ENCODE measurements at regions of chr6 and their contacts with region 1.

Region 1: DNA sequence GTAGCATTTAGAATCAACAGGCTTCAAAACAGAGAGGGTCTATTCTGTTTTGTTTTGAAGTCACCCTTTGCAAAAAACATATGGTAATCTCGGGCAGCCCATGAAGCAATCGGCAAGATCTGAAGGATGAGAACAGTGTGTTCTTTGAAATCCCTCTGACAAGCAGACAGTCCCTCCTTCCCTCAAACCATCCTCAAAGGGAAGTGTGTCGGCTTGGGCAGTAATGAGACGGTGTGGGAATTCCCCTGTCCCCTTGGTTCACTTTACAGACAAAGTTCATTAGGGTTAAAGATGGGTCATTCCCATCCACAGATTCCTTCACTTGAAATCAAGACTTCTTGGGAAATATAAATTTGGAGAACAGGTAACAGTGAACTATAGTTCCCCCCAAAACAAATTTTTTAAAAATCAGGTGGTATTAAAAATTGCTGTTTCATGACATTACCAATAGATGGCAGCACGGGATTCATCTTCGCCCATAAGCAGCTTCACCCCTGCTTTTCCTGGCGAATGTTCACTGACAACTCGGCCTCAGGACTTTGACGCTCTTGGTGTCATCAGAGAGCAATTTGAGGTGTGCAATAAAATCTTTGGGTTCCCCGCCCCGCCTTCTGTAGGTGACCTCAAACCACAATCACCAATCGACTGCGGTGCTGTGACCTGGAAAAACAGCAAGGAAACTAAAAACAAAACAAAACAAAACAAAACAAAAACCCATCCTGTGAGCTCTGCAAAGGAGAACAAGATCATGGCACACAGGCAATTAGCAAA is 159.3 kb upstream of the TNFAIP3 start:
- DNase-seq: peak; percentile 91
- ATAC-seq: peak; percentile 80
- H3K4me3 ChIP-seq: peak overlapping the region in 3 of 5 experiments; percentile 13 to 20 (median 16)
- H3K4me3 Mint-ChIP-seq: peak overlapping the region; percentile 75
- H3K27ac ChIP-seq: peak overlapping the region; percentile 16 to 27
- H3K27ac Mint-ChIP-seq: peak overlapping the region; percentile 88
- H3K4me1 ChIP-seq: peaks cover 17 to 19% of the 10 kb centered on the region in 2 donors
- H3K4me1 Mint-ChIP-seq: peaks cover 49% of the 10 kb centered on the region
- H3K27me3 ChIP-seq: no peaks in the 10 kb centered on the region
- H3K27me3 Mint-ChIP-seq: peaks cover 5% of the 10 kb centered on the region
- CTCF ChIP-seq: peak; percentile 88

Region 2: GRCh38 chr6:137791281-137792159 is 83.7 kb after region 1 on chr6:
- CTCF ChIA-PET with region 1: interaction called, 5 read pairs
- POLR2A ChIA-PET with region 1: no interaction called
- intact Hi-C with region 1: loop called (anchors 5 kb)
- DNase-seq: no peak
- ATAC-seq: no peak
- H3K4me3 ChIP-seq: no peak overlapping the region
- H3K4me3 Mint-ChIP-seq: peak overlapping the region; percentile 27
- H3K27ac ChIP-seq: peak overlapping the region in 1 of 2 donors; percentile 66
- H3K27ac Mint-ChIP-seq: peak overlapping the region; percentile 86
- H3K4me1 ChIP-seq: peaks cover 23 to 25% of the 10 kb centered on the region in 2 donors
- H3K4me1 Mint-ChIP-seq: peaks cover 41% of the 10 kb centered on the region
- H3K27me3 ChIP-seq: no peaks in the 10 kb centered on the region
- H3K27me3 Mint-ChIP-seq: no peaks in the 10 kb centered on the region
- CTCF ChIP-seq: no peak

Region 3: GRCh38 chr6:137866914-137867684 is 159.3 kb after region 1 on chr6 and contains the start of gene TNFAIP3:
- CTCF ChIA-PET with region 1: interaction called, 34 read pairs
- POLR2A ChIA-PET with region 1: interaction called, 10 read pairs
- intact Hi-C with region 1: loop called (anchors 1 kb)
- DNase-seq: peak; percentile 99
- ATAC-seq: peak; percentile 80
- H3K4me3 ChIP-seq: peak within 1 kb of the TSS; percentile 95 to 99 (median 96)
- H3K4me3 Mint-ChIP-seq: peak within 1 kb of the TSS; percentile 94
- H3K27ac ChIP-seq: peak within 1 kb of the TSS; percentile 96 to 97
- H3K27ac Mint-ChIP-seq: peak within 1 kb of the TSS; percentile 99
- H3K4me1 ChIP-seq: peaks cover 40 to 43% of the 10 kb centered on the region in 2 donors
- H3K4me1 Mint-ChIP-seq: peaks cover 50% of the 10 kb centered on the region
- H3K27me3 ChIP-seq: no peaks in the 10 kb centered on the region
- H3K27me3 Mint-ChIP-seq: no peaks in the 10 kb centered on the region
- CTCF ChIP-seq: peak; percentile 73
- total RNA-seq, gene TNFAIP3: 92.0 and 92.2 TPM in 2 replicates

Region 4: DNA sequence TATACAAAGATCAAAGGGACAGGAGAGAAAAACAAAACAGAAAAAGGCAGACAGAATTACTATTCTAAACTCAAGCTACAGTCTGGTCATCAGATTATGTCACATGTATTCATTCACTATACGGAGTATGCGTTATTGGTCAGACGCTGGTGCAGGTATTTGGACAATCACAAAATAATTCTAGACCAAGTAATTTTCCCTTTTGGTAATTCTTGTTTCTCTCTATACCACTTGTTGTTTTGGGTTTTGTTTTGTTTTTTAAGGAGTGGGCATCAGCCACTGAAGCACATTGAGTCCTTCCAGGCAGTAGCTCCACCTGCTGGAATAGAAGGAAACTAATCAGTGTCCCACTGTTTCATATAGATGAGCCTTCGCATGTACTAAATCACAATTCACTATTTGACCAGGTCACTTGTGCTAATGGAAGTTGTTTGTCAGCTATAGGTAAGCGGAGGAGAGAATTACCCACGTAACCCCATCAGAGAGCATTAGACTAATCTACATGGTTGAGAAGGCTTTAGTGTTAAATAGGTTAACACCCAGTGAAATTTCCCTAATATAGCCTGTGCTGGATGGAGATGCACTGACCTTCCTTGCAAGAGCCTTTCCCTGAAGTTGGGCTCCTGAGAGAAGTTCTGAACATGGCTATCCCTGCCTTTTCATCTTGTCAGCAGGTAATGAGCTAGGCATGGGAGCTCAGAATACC is 237.2 kb after region 1 on chr6:
- CTCF ChIA-PET with region 1: interaction called, 128 read pairs
- POLR2A ChIA-PET with region 1: no interaction called
- intact Hi-C with region 1: loop called (anchors 1 kb)
- DNase-seq: peak; percentile 66
- ATAC-seq: peak; percentile 72
- H3K4me3 ChIP-seq: no peak overlapping the region
- H3K4me3 Mint-ChIP-seq: no peak overlapping the region
- H3K27ac ChIP-seq: no peak overlapping the region
- H3K27ac Mint-ChIP-seq: no peak overlapping the region
- H3K4me1 ChIP-seq: peaks cover 15 to 19% of the 10 kb centered on the region in 2 donors
- H3K4me1 Mint-ChIP-seq: peaks cover 22% of the 10 kb centered on the region
- H3K27me3 ChIP-seq: no peaks in the 10 kb centered on the region
- H3K27me3 Mint-ChIP-seq: no peaks in the 10 kb centered on the region
- CTCF ChIP-seq: peak; percentile 87

Region 5: DNA sequence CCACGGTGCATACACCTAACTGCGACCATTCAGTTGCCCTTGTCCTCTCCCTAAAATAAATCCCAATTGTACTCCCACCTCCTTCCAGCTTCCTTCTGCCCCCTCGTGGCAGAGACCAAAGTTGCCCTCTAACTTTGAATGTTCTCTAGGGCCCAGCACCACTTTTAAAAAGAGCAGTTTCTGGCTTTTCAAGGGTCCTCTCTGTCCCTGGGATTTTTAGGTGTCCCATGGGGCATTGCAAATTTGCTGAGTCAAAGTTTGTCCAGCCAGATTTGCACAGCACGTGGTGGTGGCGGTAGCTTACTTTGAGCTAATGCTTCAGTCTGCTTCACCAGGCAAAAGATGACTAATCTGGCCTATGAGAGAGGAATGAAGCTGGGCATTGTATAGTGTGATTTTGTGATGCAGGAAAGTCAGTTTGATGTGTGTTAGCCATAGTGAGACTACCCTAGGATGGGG is 299.3 kb after region 1 on chr6:
- CTCF ChIA-PET with region 1: interaction called, 28 read pairs
- POLR2A ChIA-PET with region 1: no interaction called
- intact Hi-C with region 1: loop called (anchors 1 kb)
- DNase-seq: peak; percentile 36
- ATAC-seq: no peak
- H3K4me3 ChIP-seq: no peak overlapping the region
- H3K4me3 Mint-ChIP-seq: no peak overlapping the region
- H3K27ac ChIP-seq: no peak overlapping the region
- H3K27ac Mint-ChIP-seq: no peak overlapping the region
- H3K4me1 ChIP-seq: no peaks in the 10 kb centered on the region
- H3K4me1 Mint-ChIP-seq: peaks cover under 1% of the 10 kb centered on the region
- H3K27me3 ChIP-seq: peaks cover 0 to 2% (median 0%) of the 10 kb centered on the region in 4 experiments
- H3K27me3 Mint-ChIP-seq: peaks cover 10% of the 10 kb centered on the region
- CTCF ChIP-seq: peak; percentile 58

Measured in B cell (primary cell).